ENCODE measurements at regions of chr7 and their contacts with region 1.

Region 1: DNA sequence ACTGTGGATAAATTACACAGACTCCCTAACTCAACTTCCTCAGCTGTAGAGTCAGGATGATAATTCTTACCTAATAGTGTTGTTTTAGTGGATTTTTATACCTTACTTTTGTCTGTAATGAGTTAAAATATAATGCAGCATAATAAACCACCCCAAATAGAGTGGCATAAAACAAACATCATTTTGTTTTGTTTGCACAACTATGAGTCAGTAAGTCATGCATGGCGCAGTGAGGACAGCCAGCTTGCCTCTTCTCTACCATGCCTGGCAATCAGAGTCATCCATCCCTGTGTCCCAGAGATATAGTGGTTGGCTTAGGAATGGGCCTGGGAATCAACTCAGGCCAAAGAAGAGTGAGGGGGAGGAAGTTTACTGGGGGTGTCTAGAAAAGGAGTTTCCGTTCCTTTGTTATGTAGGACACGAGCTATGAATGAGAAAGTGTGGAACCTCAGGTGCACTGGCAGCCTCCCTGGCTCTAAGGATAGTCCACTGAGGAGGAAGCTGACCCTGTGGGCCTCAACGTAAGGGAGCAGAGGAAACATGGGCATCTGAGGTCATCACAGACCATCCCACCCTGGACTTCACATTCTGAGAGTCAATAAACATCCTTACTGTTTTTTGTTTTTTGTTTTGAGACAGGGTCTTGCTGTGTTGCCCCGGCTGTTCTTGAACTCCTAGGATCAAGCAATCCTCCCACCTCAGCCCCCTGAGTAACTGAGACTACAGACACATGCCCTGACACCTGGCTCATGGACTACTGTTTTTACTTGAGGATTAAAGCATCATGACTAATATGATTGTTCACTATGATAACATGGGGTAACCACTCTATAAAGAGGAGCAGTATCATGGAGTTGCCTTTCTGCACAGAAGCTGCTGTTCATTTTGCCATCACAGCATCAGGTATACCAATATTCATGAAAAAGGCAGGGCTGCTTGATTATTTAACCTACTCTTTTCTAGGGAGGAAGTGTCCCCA is 21.0 kb upstream of the GRB10 start:
- DNase-seq: peak; percentile 80
- ATAC-seq: peak; percentile 97
- H3K4me3 ChIP-seq: no peak overlapping the region
- H3K27ac ChIP-seq: peak overlapping the region; percentile 77
- H3K4me1 ChIP-seq: peaks cover 16% of the 10 kb centered on the region
- H3K27me3 ChIP-seq: no peaks in the 10 kb centered on the region
- CTCF ChIP-seq: no peak

Region 2: GRCh38 chr7:50832744-50833143 is 29.1 kb after region 1 on chr7:
- CTCF ChIA-PET with region 1: no interaction called
- POLR2A ChIA-PET with region 1: no interaction called
- intact Hi-C with region 1: loop called (anchors 2 kb)
- DNase-seq: peak; percentile 97
- ATAC-seq: peak; percentile 92
- H3K4me3 ChIP-seq: no peak overlapping the region
- H3K27ac ChIP-seq: peak overlapping the region; percentile 98
- H3K4me1 ChIP-seq: peaks cover 60% of the 10 kb centered on the region
- H3K27me3 ChIP-seq: no peaks in the 10 kb centered on the region
- CTCF ChIP-seq: no peak